Natural killer cell (primary cell): ENCODE measurements at regions of chr4 and their contacts with region 1.

Region 1: GRCh38 chr4:56799824-56800756 is 21.4 kb downstream of the SPINK2 start:
- DNase-seq: peak; percentile 72 to 92
- ATAC-seq: peak; percentile 96 to 99 (median 99)
- H3K4me3 ChIP-seq: peak overlapping the region; percentile 72
- H3K4me3 Mint-ChIP-seq: peak overlapping the region; percentile 99
- H3K27ac ChIP-seq: peak overlapping the region; percentile 74
- H3K27ac Mint-ChIP-seq: peak overlapping the region; percentile 91 to 97
- H3K4me1 ChIP-seq: peaks cover 16% of the 10 kb centered on the region
- H3K4me1 Mint-ChIP-seq: peaks cover 15 to 17% of the 10 kb centered on the region in 2 donors
- H3K27me3 ChIP-seq: no peaks in the 10 kb centered on the region
- H3K27me3 Mint-ChIP-seq: no peaks in the 10 kb centered on the region
- CTCF ChIP-seq: peak; percentile 92

Region 2: DNA sequence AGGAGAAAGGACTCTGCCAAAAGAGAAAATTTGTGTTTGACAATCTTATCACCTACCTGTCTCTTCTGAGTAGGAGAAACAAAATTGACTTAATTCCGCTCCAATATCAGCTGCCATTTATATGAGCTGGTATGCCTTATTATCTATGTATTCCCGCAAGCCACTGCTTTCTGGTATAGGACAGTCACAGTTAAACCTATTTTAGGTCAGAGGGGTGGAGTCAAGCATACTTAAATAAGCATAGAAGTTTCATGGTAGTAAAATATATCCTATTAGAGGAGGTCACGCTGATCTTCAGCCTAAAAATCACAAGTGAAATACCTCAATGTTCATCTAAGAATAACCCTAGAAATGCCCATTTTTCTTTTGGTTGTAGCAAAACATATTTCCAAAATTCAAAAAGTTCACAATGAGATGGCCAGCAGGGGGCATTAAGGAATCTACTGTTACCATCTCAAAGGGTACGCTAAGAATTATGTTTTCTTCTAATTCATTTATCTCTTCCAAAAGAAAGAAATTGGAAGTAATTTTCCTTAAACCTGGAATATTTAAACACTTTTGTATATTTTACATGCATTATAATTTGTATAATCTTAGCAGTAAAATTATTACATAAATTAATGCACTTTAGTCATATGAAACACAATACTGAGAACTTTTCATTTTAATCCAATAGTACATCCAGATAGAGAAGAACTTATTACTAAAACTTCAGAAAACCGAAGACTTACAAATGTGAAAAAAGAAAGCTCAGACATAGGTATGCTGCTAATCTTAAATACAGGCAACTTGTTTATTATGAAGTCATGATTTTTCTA is 375.2 kb before region 1 on chr4:
- intact Hi-C with region 1: loop called (anchors 1 kb)
- DNase-seq: peak in 1 of 2 donors; percentile 77
- ATAC-seq: peak in 2 of 3 donors; percentile 45 to 58
- H3K4me3 ChIP-seq: no peak overlapping the region
- H3K4me3 Mint-ChIP-seq: no peak overlapping the region
- H3K27ac ChIP-seq: no peak overlapping the region
- H3K27ac Mint-ChIP-seq: no peak overlapping the region
- H3K4me1 ChIP-seq: no peaks in the 10 kb centered on the region
- H3K4me1 Mint-ChIP-seq: no peaks in the 10 kb centered on the region
- H3K27me3 ChIP-seq: no peaks in the 10 kb centered on the region
- H3K27me3 Mint-ChIP-seq: no peaks in the 10 kb centered on the region
- CTCF ChIP-seq: peak; percentile 77

Region 3: DNA sequence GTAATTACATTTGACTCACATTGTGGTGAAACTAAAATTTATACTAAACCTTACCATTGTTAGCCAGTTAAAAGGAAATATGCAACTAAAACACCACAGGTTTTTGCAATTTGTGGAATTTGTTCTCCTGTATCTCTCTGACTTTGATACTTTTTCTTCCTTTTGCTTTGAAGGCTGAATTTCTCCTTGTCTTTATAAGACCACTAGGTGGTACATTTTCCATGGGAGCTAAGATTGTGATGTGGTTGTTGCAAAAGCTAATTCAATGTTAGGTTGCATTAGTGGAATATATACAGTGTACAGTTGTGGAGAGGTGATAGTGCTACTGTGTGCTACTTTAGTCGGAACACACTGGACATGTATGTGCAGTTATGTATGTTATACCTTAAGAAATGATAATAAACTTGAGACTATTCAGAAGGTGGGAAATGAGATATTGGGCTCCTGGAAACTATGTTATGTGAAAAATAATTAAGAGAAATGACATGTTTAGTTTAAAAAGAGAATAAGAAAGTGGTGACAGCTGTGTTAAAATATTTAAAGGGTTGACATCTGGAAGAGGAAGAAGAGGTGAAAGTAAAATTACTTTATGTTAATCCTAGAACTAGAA is 224.2 kb before region 1 on chr4:
- intact Hi-C with region 1: loop called (anchors 1 kb)
- DNase-seq: peak in 1 of 2 donors; percentile 48
- ATAC-seq: peak in 2 of 3 donors; percentile 49 to 59
- H3K4me3 ChIP-seq: no peak overlapping the region
- H3K4me3 Mint-ChIP-seq: no peak overlapping the region
- H3K27ac ChIP-seq: no peak overlapping the region
- H3K27ac Mint-ChIP-seq: no peak overlapping the region
- H3K4me1 ChIP-seq: no peaks in the 10 kb centered on the region
- H3K4me1 Mint-ChIP-seq: peaks cover 7 to 8% of the 10 kb centered on the region in 2 donors
- H3K27me3 ChIP-seq: no peaks in the 10 kb centered on the region
- H3K27me3 Mint-ChIP-seq: no peaks in the 10 kb centered on the region
- CTCF ChIP-seq: peak; percentile 57

Region 4: DNA sequence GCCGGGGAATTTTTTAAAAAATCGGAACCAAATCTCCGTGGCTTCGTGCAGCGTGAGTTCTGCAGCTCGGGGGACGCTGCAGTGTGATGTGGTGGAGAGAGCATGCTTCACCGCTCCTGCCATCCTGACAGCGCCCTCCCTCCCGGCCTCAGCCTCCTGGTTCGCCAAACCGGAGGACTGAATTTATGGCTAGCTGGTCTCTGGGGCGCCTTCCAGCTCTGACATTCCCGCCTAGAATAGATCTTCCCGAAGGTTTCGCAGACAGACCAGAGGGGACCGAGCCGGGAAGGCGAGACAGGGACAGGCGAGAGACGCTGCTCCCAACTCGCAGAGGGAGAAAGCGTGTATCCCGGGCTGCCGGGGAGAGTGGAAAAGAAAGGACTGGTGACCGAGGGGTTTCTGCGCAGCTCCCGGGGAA is 144.9 kb before region 1 on chr4:
- intact Hi-C with region 1: loop called (anchors 1 kb)
- DNase-seq: peak in 1 of 2 donors; percentile 53
- ATAC-seq: peak in 2 of 3 donors; percentile 16 to 31
- H3K4me3 ChIP-seq: peak overlapping the region; percentile 66
- H3K4me3 Mint-ChIP-seq: peak overlapping the region; percentile 94
- H3K27ac ChIP-seq: peak overlapping the region; percentile 73
- H3K27ac Mint-ChIP-seq: peak overlapping the region; percentile 95 to 98
- H3K4me1 ChIP-seq: peaks cover 59% of the 10 kb centered on the region
- H3K4me1 Mint-ChIP-seq: peaks cover 74 to 76% of the 10 kb centered on the region in 2 donors
- H3K27me3 ChIP-seq: no peaks in the 10 kb centered on the region
- H3K27me3 Mint-ChIP-seq: no peaks in the 10 kb centered on the region
- CTCF ChIP-seq: no peak

Region 5: DNA sequence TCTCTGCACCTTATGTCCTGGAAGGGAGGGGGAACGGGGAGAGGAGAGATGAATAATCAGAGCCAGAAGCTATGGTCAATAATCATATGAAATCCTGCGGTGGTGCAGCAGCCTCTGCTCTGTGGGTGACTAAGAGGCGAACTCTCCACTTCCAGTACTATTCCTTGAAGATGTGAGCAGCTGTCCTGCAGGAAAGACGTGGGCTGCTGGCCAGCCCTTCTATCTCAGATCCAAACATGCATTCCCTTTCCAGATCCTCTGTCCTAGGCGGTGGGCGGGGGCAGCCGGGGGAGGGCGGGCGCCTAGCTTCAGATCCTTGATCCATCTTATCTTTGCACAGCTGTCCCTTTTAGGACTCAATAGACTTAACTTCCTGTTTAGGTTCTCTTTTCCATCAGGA is 13.1 kb before region 1 on chr4:
- intact Hi-C with region 1: no loop called
- DNase-seq: no peak
- ATAC-seq: no peak
- H3K4me3 ChIP-seq: no peak overlapping the region
- H3K4me3 Mint-ChIP-seq: no peak overlapping the region
- H3K27ac ChIP-seq: no peak overlapping the region
- H3K27ac Mint-ChIP-seq: no peak overlapping the region
- H3K4me1 ChIP-seq: no peaks in the 10 kb centered on the region
- H3K4me1 Mint-ChIP-seq: no peaks in the 10 kb centered on the region
- H3K27me3 ChIP-seq: no peaks in the 10 kb centered on the region
- H3K27me3 Mint-ChIP-seq: no peaks in the 10 kb centered on the region
- CTCF ChIP-seq: no peak